ENCODE measurements at regions of chr22 and their contacts with region 1.

Region 1: DNA sequence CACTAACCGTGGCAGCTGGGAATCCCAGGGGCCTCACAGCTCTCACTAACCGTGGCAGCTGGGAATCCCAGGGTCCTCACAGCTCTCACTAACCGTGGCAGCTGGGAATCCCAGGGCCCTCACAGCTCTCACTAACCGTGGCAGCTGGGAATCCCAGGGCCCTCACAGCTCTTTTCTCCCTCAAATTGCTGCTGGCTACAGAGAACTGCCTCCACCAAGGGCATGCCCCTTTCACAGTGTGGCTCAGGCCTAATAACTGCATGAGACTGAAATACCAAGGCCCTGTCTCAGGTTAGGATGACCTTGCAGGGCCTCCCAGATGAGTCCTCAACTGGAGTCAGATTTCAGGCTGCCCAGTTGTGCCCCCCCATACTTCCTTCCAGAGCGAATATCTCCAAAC is 35.1 kb upstream of the GGTLC2 start:
- DNase-seq: peak in 1 of 4 experiments; percentile 22
- ATAC-seq: peak; percentile 15; the same call in 2 of the 3 replicates
- H3K4me3 ChIP-seq: no peak overlapping the region
- H3K27ac ChIP-seq: no peak overlapping the region
- H3K4me1 ChIP-seq: no peaks in the 10 kb centered on the region
- H3K27me3 ChIP-seq: peaks cover 40 to 44% of the 10 kb centered on the region in 2 experiments
- CTCF ChIP-seq: no peak
- EP300 ChIP-seq: no peak
- POLR2A ChIP-seq: no peak
- RAD21 ChIP-seq: no peak

Region 2: DNA sequence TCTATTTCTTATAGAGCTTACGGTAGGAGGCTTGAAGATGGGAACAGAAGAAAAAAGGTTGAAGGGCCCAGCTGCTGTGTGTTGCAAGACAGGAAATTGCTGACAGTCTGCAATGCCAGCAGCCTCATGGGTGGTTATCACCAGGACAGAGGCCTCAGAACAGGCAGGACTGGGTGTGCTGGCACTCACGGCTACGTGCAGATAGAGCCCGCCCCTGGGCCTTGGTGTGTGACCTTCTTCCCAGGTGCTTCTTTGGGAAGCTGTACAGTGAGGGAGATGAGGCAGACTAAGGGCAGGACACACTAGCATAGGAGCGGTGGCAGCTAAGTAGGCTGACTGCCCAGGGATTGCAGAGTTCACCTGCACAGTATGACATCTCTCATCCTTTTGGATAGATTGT is 62.8 kb before region 1 on chr22:
- CTCF ChIA-PET with region 1: no interaction called
- POLR2A ChIA-PET with region 1: no interaction called
- in situ Hi-C with region 1: no loop called
- intact Hi-C with region 1: loop called (anchors 10 kb)
- DNase-seq: peak; percentile 56 to 72 (median 68)
- ATAC-seq: peak; percentile 44
- H3K4me3 ChIP-seq: no peak overlapping the region
- H3K27ac ChIP-seq: no peak overlapping the region; the same call in 2 of the 3 replicates
- H3K4me1 ChIP-seq: peaks cover 13 to 20% of the 10 kb centered on the region in 2 experiments
- H3K27me3 ChIP-seq: no peaks in the 10 kb centered on the region
- CTCF ChIP-seq: no peak
- EP300 ChIP-seq: no peak
- POLR2A ChIP-seq: no peak
- RAD21 ChIP-seq: no peak

Measured in K562 (cell line).